Naive thymus-derived CD4-positive, alpha-beta T cell (primary cell): ENCODE measurements at regions of chr6 and their contacts with region 1.

Region 1: GRCh38 chr6:158009114-158009891 is 27.6 kb downstream of the SYNJ2 start:
- DNase-seq: peak in 7 of 9 donors; percentile 19 to 53 (median 41)
- ATAC-seq: peak; percentile 54
- H3K4me3 ChIP-seq: peak overlapping the region; percentile 43
- H3K4me3 Mint-ChIP-seq: peak overlapping the region; percentile 70 to 85 (median 80)
- H3K27ac ChIP-seq: peak overlapping the region; percentile 56
- H3K27ac Mint-ChIP-seq: peak overlapping the region; percentile 76 to 97 (median 91)
- H3K4me1 ChIP-seq: peaks cover 18 to 57% of the 10 kb centered on the region in 2 donors
- H3K4me1 Mint-ChIP-seq: peaks cover 62 to 94% (median 85%) of the 10 kb centered on the region in 7 donors
- H3K27me3 ChIP-seq: no peaks in the 10 kb centered on the region
- H3K27me3 Mint-ChIP-seq: no peaks in the 10 kb centered on the region

Region 2: GRCh38 chr6:157989541-157990289 is 19.6 kb before region 1 on chr6:
- CTCF ChIA-PET with region 1: no interaction called
- POLR2A ChIA-PET with region 1: interaction called, 4 read pairs
- intact Hi-C with region 1: loop called in 1 of 2 experiments (anchors 2 kb)
- DNase-seq: peak in 1 of 9 donors; percentile 23
- ATAC-seq: peak; percentile 22
- H3K4me3 ChIP-seq: peak overlapping the region; percentile 25
- H3K4me3 Mint-ChIP-seq: peak overlapping the region; percentile 84 to 90 (median 87)
- H3K27ac ChIP-seq: peak overlapping the region; percentile 71
- H3K27ac Mint-ChIP-seq: peak overlapping the region; percentile 75 to 98 (median 95)
- H3K4me1 ChIP-seq: peaks cover 5 to 50% of the 10 kb centered on the region in 2 donors
- H3K4me1 Mint-ChIP-seq: peaks cover 38 to 91% (median 73%) of the 10 kb centered on the region in 7 donors
- H3K27me3 ChIP-seq: no peaks in the 10 kb centered on the region
- H3K27me3 Mint-ChIP-seq: no peaks in the 10 kb centered on the region

Region 3: GRCh38 chr6:158344534-158344933 is 335.2 kb after region 1 on chr6:
- CTCF ChIA-PET with region 1: no interaction called
- POLR2A ChIA-PET with region 1: no interaction called
- intact Hi-C with region 1: no loop called
- DNase-seq: no peak
- ATAC-seq: no peak
- H3K4me3 ChIP-seq: no peak overlapping the region
- H3K4me3 Mint-ChIP-seq: peak overlapping the region in 1 of 10 donors; percentile 30
- H3K27ac ChIP-seq: no peak overlapping the region
- H3K27ac Mint-ChIP-seq: no peak overlapping the region
- H3K4me1 ChIP-seq: peaks cover 0 to 3% of the 10 kb centered on the region in 2 donors
- H3K4me1 Mint-ChIP-seq: peaks cover 0 to 15% (median 8%) of the 10 kb centered on the region in 7 donors
- H3K27me3 ChIP-seq: no peaks in the 10 kb centered on the region
- H3K27me3 Mint-ChIP-seq: no peaks in the 10 kb centered on the region